A549 (cell line): ENCODE measurements at regions of chr14 and their contacts with region 1.

Region 1: DNA sequence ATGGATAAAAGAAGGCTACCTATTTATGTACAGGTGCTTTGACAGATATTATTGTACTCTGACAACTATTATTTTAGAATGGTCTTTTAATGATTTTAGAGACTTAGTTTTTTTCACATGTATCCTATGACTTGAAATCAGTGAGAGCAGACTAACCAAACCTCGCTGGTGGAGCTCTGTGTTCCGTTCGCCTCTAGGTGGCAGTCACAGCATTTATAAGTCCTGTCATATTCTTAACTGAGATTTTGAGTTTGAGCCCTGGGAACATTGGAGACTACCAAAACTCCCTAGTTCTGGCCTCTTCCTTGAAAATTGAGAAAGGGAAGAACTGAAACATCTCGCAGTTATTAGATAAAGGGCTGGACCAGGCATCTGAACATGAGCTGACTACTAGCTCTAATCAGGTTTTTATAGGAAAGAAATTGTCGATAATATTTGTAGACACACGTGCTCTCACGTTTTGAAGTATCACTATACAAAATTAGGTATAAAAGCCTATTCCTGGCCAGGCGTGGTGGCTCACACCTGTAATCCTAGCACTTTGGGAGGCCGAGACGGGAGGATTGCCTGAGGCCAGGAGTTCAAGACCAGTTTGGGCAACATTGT is 48.3 kb downstream of the TTLL5 start:
- DNase-seq: peak; percentile 65 to 80
- ATAC-seq: peak; percentile 68 to 82; a peak in 5 of 6 replicates
- H3K4me3 ChIP-seq: no peak overlapping the region
- H3K27ac ChIP-seq: no peak overlapping the region
- H3K4me1 ChIP-seq: peaks cover 21% of the 10 kb centered on the region
- CTCF ChIP-seq: peak; percentile 82
- EP300 ChIP-seq: no peak
- POLR2A ChIP-seq: no peak
- RAD21 ChIP-seq: peak; percentile 77 to 82

Region 2: DNA sequence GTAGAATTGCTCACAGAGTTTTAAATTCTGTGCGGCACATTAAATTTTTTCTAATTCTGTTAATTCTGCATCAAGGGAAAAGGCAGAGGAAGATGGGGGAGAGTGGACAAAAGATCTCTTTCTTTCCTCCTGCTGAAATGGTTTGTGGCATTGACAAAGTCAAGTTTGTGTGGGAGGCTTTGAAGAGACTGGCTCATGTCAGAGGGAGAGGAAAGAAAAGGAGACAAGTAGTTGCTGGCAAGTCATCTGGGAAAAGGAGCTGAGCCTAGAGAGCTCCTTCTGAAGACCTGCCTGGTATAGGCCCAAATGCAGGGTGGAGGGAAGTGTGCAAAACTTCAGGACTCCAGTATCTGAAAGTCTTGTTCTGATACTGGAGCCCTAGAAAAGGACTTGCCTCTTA is 11.9 kb before region 1 on chr14:
- CTCF ChIA-PET with region 1: interaction called, 19 read pairs
- POLR2A ChIA-PET with region 1: no interaction called
- DNase-seq: no peak
- ATAC-seq: no peak
- H3K4me3 ChIP-seq: no peak overlapping the region
- H3K27ac ChIP-seq: no peak overlapping the region
- H3K4me1 ChIP-seq: no peaks in the 10 kb centered on the region
- CTCF ChIP-seq: no peak
- EP300 ChIP-seq: no peak
- POLR2A ChIP-seq: no peak
- RAD21 ChIP-seq: no peak

Region 3: GRCh38 chr14:75794615-75795038 is 85.3 kb after region 1 on chr14:
- CTCF ChIA-PET with region 1: interaction called, 32 read pairs
- POLR2A ChIA-PET with region 1: no interaction called
- DNase-seq: peak in 1 of 2 experiments; percentile 9
- ATAC-seq: peak; percentile 71 to 77; a peak in 4 of 6 replicates
- H3K4me3 ChIP-seq: no peak overlapping the region
- H3K27ac ChIP-seq: no peak overlapping the region
- H3K4me1 ChIP-seq: no peaks in the 10 kb centered on the region
- CTCF ChIP-seq: peak; percentile 15; the same call in 2 of the 3 replicates
- EP300 ChIP-seq: no peak
- POLR2A ChIP-seq: no peak
- RAD21 ChIP-seq: peak; percentile 24 to 28; a peak in 2 of 5 replicates

Region 4: DNA sequence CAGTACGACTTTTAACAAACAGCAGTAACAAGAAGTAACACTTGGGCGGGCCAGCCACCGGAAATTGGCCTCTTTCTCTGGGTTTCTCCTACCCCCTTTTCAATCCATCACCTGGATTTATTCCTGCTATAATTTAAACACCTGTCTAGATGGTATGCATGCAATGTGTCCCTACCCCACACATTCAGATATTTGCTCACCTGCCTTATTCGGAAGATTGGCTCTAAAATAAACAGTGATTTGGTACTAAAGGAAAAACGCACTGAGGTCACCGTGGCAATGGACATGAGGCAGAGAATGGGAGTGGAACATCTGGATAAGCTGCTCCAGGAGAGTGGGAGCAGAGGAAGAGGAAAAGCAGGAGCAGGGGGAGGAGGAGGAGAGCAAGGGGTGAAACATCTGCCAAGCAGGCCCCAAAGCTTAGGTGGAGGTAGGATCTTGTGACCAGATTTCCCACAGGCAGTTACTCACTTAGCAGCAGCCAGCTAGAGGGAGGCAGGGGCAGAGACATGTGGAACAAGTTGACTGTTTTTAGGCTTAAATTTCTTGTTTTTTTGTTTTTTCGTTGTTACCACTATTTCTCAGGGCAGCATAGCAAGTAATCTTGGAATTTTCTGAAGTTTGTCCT is 102.7 kb after region 1 on chr14:
- CTCF ChIA-PET with region 1: no interaction called
- POLR2A ChIA-PET with region 1: no interaction called
- DNase-seq: no peak
- ATAC-seq: no peak
- H3K4me3 ChIP-seq: no peak overlapping the region
- H3K27ac ChIP-seq: no peak overlapping the region
- H3K4me1 ChIP-seq: no peaks in the 10 kb centered on the region
- CTCF ChIP-seq: no peak
- EP300 ChIP-seq: no peak
- POLR2A ChIP-seq: no peak
- RAD21 ChIP-seq: no peak

Region 5: DNA sequence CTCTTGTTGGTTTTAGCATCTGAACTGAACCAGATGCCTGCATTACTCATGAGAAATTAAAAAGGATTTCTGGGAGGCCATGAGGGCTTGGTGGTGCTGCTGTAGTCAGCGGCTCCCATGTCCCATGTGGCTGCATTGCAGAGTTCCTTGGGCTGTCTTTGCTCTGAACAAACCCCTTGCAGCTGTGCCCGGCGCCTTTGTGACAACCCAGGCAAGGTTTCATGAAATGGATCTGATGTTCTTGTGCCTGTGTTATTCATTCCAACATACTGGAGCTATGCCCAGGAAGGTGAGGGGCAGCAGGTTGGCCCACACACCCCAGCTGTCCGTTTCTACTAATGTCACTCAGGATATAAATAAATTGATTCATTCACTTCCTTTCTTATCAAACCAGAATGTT is 231.7 kb after region 1 on chr14:
- CTCF ChIA-PET with region 1: interaction called, 19 read pairs
- POLR2A ChIA-PET with region 1: no interaction called
- DNase-seq: no peak
- ATAC-seq: no peak
- H3K4me3 ChIP-seq: no peak overlapping the region
- H3K27ac ChIP-seq: no peak overlapping the region
- H3K4me1 ChIP-seq: no peaks in the 10 kb centered on the region
- CTCF ChIP-seq: no peak
- EP300 ChIP-seq: no peak
- POLR2A ChIP-seq: no peak
- RAD21 ChIP-seq: no peak

Region 6: GRCh38 chr14:75989134-75989533 is 279.8 kb after region 1 on chr14:
- CTCF ChIA-PET with region 1: interaction called, 448 read pairs
- POLR2A ChIA-PET with region 1: no interaction called
- DNase-seq: peak in 1 of 2 experiments; percentile 28
- ATAC-seq: no peak
- H3K4me3 ChIP-seq: no peak overlapping the region
- H3K27ac ChIP-seq: no peak overlapping the region
- H3K4me1 ChIP-seq: peaks cover 13% of the 10 kb centered on the region; the same call in 2 of the 3 replicates
- CTCF ChIP-seq: no peak
- EP300 ChIP-seq: no peak
- POLR2A ChIP-seq: no peak
- RAD21 ChIP-seq: no peak